Left ventricle myocardium superior (tissue), 1 donor: ENCODE measurements at regions of chr5 and their contacts with region 1.

Region 1: GRCh38 chr5:151126199-151126645 is 31.4 kb downstream of the ANXA6 start:
- DNase-seq: peak; percentile 87
- ATAC-seq: peak; percentile 53

Region 2: GRCh38 chr5:151164686-151165392 is 38.6 kb after region 1 on chr5:
- intact Hi-C with region 1: loop called (anchors 5 kb)
- DNase-seq: peak; percentile 72
- ATAC-seq: peak; percentile 92

Region 3: GRCh38 chr5:151178777-151179487 is 52.7 kb after region 1 on chr5:
- intact Hi-C with region 1: no loop called
- DNase-seq: no peak
- ATAC-seq: no peak

Region 4: DNA sequence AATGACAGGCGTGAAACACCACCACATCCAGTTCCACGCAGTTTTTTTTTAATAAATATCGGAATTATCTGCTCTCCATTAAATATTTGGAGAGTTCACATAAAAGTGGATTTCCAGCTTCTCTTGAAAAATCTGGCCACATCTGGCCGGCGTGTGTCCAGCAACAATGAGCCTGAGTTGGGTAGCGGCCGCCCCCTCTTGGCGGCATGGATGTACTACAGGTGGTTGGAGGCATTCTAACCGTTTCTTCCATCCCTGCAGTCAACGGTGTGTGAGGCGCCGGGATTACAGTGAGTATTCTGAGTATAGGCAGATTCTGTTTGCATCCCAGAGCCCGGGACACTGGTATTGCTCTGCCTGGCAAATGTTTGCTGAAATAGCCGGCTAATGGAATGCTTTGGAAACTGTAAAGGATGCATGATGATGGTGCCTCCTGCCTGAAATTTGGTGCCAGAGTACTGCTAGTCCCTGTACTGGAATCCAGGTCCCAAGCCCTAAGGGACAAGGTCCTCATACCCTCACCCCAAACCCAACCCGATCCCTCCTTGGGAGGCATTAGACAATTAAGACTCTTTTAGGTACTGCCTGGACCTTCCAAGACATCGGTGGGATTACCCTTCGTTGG is 113.1 kb after region 1 on chr5:
- intact Hi-C with region 1: loop called (anchors 10 kb)
- DNase-seq: peak; percentile 90
- ATAC-seq: peak; percentile 72